ENCODE measurements at regions of chr4 and their contacts with region 1.

Region 1: DNA sequence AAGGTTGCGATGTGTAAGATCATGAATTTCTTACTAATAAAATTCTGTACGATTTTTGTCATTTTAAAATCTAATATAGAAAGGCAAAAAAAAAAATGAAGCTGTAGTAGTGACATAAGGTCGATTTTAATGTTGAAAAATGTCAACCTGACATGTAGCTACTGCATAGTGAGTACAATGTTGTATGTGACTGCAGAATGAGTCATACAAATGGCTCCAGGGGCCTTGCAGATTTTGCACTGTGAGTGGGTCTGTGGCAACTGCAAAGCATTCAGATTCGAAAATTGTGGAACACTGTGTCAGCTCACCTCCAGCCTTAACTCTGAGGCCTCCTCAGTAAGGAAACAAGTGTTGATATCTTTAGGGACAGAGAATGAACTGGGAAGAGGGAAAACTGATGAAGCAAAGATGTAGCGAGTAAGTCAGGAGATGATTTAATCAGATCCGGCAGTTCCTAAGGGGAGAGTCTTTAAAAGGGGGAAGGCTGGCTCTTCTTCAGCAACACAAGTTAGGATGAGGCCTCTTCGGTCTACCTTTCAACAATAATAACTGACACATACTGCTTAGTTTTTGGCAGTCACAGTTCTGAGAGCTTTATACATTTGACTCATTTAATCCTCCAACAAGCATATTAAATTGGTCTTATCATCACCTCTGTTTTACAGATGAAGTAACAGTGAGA is 24.9 kb downstream of the TKTL2 start:
- DNase-seq: no peak
- H3K4me3 ChIP-seq: no peak overlapping the region
- H3K27ac ChIP-seq: no peak overlapping the region
- H3K4me1 ChIP-seq: no peaks in the 10 kb centered on the region
- CTCF ChIP-seq: no peak

Region 2: DNA sequence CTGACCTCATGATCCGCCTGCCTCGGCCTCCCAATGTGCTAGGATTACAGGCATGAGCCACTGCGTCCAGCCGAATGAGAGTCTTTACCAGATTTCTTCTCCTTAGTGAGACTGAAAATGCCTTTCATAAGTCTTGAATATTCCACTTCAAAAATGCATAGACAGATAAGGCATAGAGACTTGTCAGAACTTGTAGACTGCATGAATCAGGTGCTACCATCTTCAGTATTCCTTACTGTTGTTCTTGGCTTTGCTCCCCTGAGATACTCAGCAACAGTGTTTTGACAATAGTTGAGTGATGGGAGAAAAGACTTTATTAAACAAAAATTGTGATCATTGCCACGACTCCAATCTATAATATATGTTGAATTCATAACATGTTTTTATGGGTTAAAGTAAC is 13.9 kb after region 1 on chr4:
- CTCF ChIA-PET with region 1: no interaction called
- POLR2A ChIA-PET with region 1: interaction called, 18 read pairs
- intact Hi-C with region 1: no loop called
- DNase-seq: no peak
- H3K4me3 ChIP-seq: no peak overlapping the region
- H3K27ac ChIP-seq: no peak overlapping the region
- H3K4me1 ChIP-seq: no peaks in the 10 kb centered on the region
- CTCF ChIP-seq: no peak